ENCODE measurements at regions of chr1 and their contacts with region 1.

Region 1: DNA sequence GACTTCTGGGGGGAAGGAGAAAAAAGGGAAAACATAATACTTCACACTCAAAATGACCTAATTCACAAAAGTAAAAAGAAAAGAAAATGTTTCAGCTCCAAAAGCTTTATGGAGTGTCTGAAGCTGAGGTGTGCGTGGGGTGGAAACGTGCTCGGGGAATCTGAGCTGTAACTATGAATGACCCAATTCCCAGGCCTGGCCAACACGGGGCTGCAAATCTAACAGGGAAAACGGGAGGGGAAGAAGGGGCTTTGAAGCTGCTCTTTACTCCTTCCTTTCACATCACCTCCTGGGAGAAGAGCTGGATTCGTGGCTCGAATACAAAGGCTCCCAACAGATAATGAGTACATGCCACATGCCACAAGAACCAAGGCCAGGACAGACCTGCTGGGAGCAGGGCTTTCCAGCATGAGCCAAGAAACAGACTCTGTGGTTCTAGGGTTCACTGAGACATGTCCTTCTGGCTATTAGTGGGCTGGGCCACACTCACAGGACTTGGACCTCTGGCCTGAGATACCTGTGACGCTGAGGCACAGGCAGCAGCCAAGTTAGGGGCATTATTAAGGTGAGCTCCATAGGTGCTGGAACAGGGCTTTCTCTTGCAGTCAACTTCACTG is 51.5 kb downstream of the SLC66A1 start:
- DNase-seq: no peak
- H3K4me3 ChIP-seq: no peak overlapping the region
- H3K27ac ChIP-seq: no peak overlapping the region
- H3K4me1 ChIP-seq: peaks cover 0 to 47% (median 18%) of the 10 kb centered on the region in 4 experiments
- H3K27me3 ChIP-seq: no peaks in the 10 kb centered on the region

Region 2: GRCh38 chr1:19374083-19374801 is 10.6 kb after region 1 on chr1:
- CTCF ChIA-PET with region 1: interaction called, 13 read pairs
- POLR2A ChIA-PET with region 1: no interaction called
- DNase-seq: no peak
- H3K4me3 ChIP-seq: no peak overlapping the region
- H3K27ac ChIP-seq: no peak overlapping the region
- H3K4me1 ChIP-seq: peaks cover 0 to 54% (median 25%) of the 10 kb centered on the region in 4 experiments
- H3K27me3 ChIP-seq: no peaks in the 10 kb centered on the region